HCT116 (cell line): ENCODE measurements at regions of chr1 and their contacts with region 1.

Region 1: DNA sequence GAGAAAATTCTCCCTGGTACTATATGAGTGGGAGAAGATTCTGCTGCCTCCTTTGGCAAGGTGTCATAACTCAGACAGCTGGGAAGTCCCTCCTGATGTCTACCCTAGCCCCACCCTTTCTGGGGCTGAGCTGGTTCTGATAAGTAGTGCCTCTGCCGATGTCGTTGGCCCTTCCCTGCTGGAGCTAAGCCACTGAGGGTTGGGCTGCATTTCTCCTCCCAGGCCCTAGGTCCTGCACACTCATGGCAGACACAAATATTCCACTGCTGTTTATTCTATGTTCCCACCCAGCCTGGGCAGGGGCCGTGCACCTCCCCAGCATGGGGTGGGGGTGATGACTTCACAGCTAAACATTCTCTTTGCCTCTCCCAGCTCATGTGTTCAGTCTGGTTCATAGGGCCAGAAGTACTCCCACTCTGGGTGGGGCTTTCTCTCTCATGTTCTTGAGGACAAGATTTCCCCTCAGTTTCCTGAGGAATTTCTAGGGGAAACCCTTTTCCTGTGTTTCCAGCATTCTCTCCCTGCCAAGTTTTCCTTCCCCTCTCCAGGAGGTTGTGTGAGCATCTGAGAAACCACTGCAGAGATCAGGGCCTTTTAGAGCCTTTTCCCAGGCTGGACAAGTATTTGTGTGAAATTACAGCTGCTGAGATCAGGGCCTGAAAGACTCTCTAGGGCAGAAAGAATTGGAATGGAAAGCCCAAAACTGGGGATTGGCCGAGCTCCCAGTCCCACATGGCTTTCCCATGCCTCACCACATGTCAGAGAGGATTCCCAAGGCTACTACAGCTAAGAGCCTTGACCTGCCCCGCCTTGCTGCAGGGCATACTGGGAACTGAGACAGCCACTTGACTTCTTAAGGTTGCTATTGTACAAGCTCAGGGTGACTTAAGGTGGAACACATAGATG is 66.2 kb downstream of the ATP2B4 start:
- DNase-seq: peak; percentile 59
- ATAC-seq: peak; percentile 95
- H3K4me3 ChIP-seq: peak overlapping the region; percentile 19 to 26
- H3K27ac ChIP-seq: peak overlapping the region; percentile 73
- H3K4me1 ChIP-seq: peaks cover 14 to 27% of the 10 kb centered on the region in 2 experiments
- H3K27me3 ChIP-seq: no peaks in the 10 kb centered on the region
- CTCF ChIP-seq: no peak
- POLR2A ChIP-seq: no peak
- RAD21 ChIP-seq: 0 out of 2 replicates have a peak, but pooled peaks have one; percentile 23

Region 2: DNA sequence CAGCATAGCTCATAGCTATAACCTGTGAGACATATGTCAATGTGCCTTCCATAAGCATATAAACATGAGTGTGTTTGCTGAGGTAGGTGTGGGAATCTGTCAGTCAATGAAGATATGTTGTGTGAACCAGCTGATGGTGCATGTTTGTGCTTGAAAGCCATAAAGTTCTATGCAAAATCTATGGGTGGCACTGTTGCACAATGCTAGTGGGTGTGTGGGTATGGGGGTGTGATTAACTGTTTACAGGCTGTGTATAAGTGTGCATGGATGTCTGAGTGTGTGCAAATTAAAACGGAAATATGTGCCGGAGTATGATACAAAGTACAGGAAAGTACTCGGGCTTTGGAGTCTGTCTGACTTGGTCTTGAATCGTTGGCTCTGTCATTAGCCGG is 67.2 kb before region 1 on chr1:
- CTCF ChIA-PET with region 1: interaction called, 12 read pairs
- POLR2A ChIA-PET with region 1: interaction called, 4 read pairs
- RAD21 ChIA-PET with region 1: interaction called in 1 of 2 experiments, 3 read pairs
- intact Hi-C with region 1: loop called (anchors 2 kb)
- DNase-seq: no peak
- ATAC-seq: peak; percentile 41
- H3K4me3 ChIP-seq: peak overlapping the region in 1 of 2 experiments; percentile 64; a peak in 2 of 4 replicates
- H3K27ac ChIP-seq: no peak overlapping the region
- H3K4me1 ChIP-seq: peaks cover 5 to 33% of the 10 kb centered on the region in 2 experiments; a peak in 3 of 4 replicates
- H3K27me3 ChIP-seq: no peaks in the 10 kb centered on the region
- CTCF ChIP-seq: peak in 2 of 3 experiments; percentile 37 to 61; a peak in 4 of 6 replicates
- POLR2A ChIP-seq: no peak
- RAD21 ChIP-seq: peak; percentile 88

Region 3: DNA sequence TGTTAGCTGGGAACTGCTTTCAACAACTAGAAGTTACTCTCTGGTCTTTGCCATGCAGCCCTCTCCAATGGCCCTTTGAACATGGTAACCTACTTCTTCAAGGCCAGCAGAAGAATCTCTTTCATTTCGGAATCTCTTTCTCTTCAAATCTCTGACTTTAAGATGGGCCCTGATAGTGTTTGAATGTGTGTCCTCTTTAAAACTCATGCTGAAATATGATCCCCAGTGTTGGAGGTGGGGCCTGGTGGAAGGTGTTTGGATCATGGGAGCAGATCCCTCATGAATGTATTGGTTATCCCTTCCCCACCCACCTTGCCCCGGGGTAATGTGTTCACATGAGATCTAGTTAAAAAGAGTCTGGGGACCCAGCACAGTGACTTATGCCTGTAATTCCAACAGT is 325.6 kb after region 1 on chr1:
- CTCF ChIA-PET with region 1: no interaction called
- POLR2A ChIA-PET with region 1: no interaction called
- RAD21 ChIA-PET with region 1: no interaction called
- intact Hi-C with region 1: no loop called
- DNase-seq: no peak
- ATAC-seq: no peak
- H3K4me3 ChIP-seq: no peak overlapping the region
- H3K27ac ChIP-seq: no peak overlapping the region
- H3K4me1 ChIP-seq: peaks cover 0 to 6% of the 10 kb centered on the region in 2 experiments; a peak in 1 of 4 replicates
- H3K27me3 ChIP-seq: no peaks in the 10 kb centered on the region
- CTCF ChIP-seq: no peak
- POLR2A ChIP-seq: no peak
- RAD21 ChIP-seq: no peak

Region 4: GRCh38 chr1:204080163-204080903 is 387.5 kb after region 1 on chr1:
- CTCF ChIA-PET with region 1: no interaction called
- POLR2A ChIA-PET with region 1: no interaction called
- RAD21 ChIA-PET with region 1: no interaction called
- intact Hi-C with region 1: no loop called
- DNase-seq: peak; percentile 90
- ATAC-seq: peak; percentile 97
- H3K4me3 ChIP-seq: peak overlapping the region; percentile 18 to 52
- H3K27ac ChIP-seq: peak overlapping the region; percentile 85
- H3K4me1 ChIP-seq: peaks cover 52 to 78% of the 10 kb centered on the region in 2 experiments
- H3K27me3 ChIP-seq: no peaks in the 10 kb centered on the region
- CTCF ChIP-seq: peak in 2 of 3 experiments; percentile 6 to 15; a peak in 1 of 6 replicates
- POLR2A ChIP-seq: no peak
- RAD21 ChIP-seq: no peak